Caco-2 (cell line): ENCODE measurements at regions of chr1 and their contacts with region 1.

Region 1: DNA sequence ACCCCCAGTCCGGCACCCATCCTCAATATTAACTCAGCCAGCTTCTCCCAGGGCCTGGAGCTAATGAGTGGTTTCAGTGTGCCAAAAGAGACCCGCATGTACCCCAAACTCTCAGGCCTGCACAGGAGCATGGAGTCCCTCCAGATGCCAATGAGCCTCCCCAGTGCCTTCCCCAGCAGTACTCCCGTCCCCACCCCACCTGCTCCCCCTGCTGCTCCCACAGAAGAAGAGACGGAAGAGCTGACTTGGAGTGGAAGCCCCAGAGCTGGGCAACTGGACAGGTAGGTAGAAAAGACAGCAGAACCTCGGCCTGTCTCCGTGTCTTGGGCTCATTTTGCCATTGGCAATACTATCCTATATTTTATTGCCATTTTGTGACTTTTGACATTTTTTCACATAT is 45.4 kb upstream of the IPO9 start:
- DNase-seq: no peak
- H3K4me3 ChIP-seq: no peak overlapping the region
- H3K4me3 Mint-ChIP-seq: no peak overlapping the region
- H3K27ac Mint-ChIP-seq: no peak overlapping the region
- H3K4me1 ChIP-seq: no peaks in the 10 kb centered on the region
- H3K4me1 Mint-ChIP-seq: no peaks in the 10 kb centered on the region
- H3K27me3 ChIP-seq: no peaks in the 10 kb centered on the region
- H3K27me3 Mint-ChIP-seq: no peaks in the 10 kb centered on the region
- CTCF ChIP-seq: peak in 1 of 2 experiments; percentile 13

Region 2: GRCh38 chr1:201709564-201710295 is 73.8 kb before region 1 on chr1:
- CTCF ChIA-PET with region 1: interaction called, 17 read pairs
- POLR2A ChIA-PET with region 1: no interaction called
- intact Hi-C with region 1: no loop called
- DNase-seq: peak; percentile 64 to 80
- H3K4me3 ChIP-seq: no peak overlapping the region
- H3K4me3 Mint-ChIP-seq: no peak overlapping the region
- H3K27ac Mint-ChIP-seq: no peak overlapping the region
- H3K4me1 ChIP-seq: 0 out of 2 replicates have a peak, but pooled peaks cover 8% of the 10 kb centered on the region
- H3K4me1 Mint-ChIP-seq: no peaks in the 10 kb centered on the region
- H3K27me3 ChIP-seq: no peaks in the 10 kb centered on the region
- H3K27me3 Mint-ChIP-seq: no peaks in the 10 kb centered on the region
- CTCF ChIP-seq: peak; percentile 94 to 95